Psoas muscle (tissue), 8 donors: ENCODE measurements at regions of chrX and their contacts with region 1.

Region 1: GRCh38 chrX:130916636-130917422 is 13.8 kb upstream of the ENOX2 start:
- DNase-seq: peak; percentile 18 to 42
- ATAC-seq: peak; percentile 44 to 77 (median 62)
- H3K4me3 ChIP-seq: no peak overlapping the region
- H3K27ac ChIP-seq: no peak overlapping the region
- H3K4me1 ChIP-seq: no peaks in the 10 kb centered on the region
- H3K27me3 ChIP-seq: peaks cover 0 to 7% (median 0%) of the 10 kb centered on the region in 3 donors
- CTCF ChIP-seq: peak; percentile 79

Region 2: DNA sequence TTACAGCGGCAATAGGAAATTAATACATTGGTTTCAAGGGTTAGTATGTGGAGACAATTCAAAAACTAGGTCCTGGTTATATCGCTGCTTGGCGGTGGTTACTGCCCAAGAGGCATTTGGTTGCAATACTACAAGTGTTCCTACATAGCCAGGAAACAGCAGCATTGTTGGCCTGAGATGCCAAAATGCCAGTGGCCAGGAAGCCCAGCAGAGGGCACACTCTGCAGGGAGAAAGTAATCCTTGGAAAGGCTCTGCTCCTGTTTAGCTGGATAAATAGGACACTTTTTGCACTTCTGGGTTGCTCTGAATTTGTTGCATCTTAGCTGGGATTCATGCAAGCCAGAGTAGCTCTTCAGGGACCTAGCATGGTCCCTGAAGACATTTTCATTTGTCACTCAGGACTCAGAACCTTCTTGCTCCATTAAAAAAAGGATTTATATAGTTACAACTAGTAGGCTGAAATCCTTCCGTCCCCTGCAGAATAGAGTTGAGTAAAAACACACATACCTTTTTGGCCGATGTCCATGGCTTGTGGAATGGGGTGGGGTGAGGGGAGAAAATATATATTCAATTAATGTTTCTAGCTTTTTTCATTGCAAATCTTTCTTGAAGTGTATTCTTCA is 523.3 kb before region 1 on chrX:
- intact Hi-C with region 1: loop called (anchors 5 kb)
- DNase-seq: peak in 1 of 2 donors; percentile 18
- ATAC-seq: peak in 2 of 4 donors; percentile 57 to 71
- H3K4me3 ChIP-seq: no peak overlapping the region
- H3K27ac ChIP-seq: no peak overlapping the region
- H3K4me1 ChIP-seq: no peaks in the 10 kb centered on the region
- H3K27me3 ChIP-seq: peaks cover 0 to 7% (median 0%) of the 10 kb centered on the region in 3 donors
- CTCF ChIP-seq: peak; percentile 62

Region 3: DNA sequence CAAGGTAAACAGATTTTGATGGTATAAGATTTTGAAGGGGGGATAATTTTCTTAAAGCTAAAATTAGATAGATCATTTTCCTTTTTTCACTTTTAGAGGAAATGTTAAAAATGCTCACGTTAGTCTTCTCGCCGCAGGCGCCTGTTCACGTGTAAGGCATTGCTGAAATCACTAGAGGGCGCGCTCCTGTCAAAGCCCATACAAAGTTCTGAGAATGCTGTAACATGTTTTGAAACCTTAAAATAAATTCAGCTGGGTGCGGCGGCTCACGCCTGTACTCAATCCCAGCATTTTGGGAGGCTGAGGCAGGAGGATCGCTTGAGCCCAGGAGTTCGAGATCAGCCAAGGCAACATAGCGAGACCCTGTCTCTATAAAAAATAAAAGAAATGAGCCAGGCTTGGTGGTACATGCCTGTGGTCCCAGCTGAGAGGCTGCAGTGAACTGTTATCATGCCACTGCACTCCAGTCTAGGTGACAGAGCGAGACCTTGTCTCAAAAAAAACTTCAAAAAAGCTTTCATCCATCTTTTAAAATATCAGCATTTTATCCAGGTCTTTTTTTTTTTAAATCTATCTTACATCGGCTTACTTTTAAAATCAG is 377.0 kb before region 1 on chrX:
- intact Hi-C with region 1: loop called (anchors 2 to 10 kb)
- DNase-seq: peak; percentile 20 to 42
- ATAC-seq: peak in 2 of 4 donors; percentile 37 to 39
- H3K4me3 ChIP-seq: no peak overlapping the region
- H3K27ac ChIP-seq: no peak overlapping the region
- H3K4me1 ChIP-seq: no peaks in the 10 kb centered on the region
- H3K27me3 ChIP-seq: no peaks in the 10 kb centered on the region
- CTCF ChIP-seq: peak; percentile 62

Region 4: DNA sequence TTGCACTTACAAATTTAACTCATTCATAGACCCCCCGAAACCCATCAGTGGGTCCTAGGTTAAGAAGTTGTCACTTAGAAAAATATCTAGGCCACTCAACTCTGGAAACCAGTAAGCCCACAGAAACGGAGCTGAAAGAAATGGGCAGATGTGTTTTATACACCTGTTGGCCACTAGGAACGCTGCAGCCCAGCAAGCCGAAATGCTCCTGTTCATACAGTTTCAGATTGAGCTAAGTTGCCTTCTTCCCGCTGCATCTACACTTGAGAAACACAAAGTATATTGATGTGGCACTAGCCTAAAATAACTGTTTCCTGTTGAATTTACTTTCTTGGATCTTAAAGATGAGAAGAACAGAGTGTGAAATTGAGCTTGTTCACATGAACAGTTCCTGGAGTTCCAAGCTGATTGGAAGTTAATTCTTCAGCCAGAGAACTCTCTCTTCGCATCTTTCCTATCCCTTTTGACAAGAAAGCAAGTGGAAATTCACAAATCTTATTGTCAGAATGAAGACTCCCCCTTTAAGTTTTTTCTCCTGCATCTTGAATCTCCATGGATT is 340.9 kb before region 1 on chrX:
- intact Hi-C with region 1: loop called (anchors 5 kb)
- DNase-seq: peak; percentile 16 to 54
- ATAC-seq: peak in 1 of 4 donors; percentile 46
- H3K4me3 ChIP-seq: no peak overlapping the region
- H3K27ac ChIP-seq: no peak overlapping the region
- H3K4me1 ChIP-seq: no peaks in the 10 kb centered on the region
- H3K27me3 ChIP-seq: peaks cover 0 to 2% (median 0%) of the 10 kb centered on the region in 3 donors
- CTCF ChIP-seq: peak; percentile 76

Region 5: GRCh38 chrX:131010186-131010585 is 93.4 kb after region 1 on chrX:
- intact Hi-C with region 1: no loop called
- DNase-seq: no peak
- ATAC-seq: no peak
- H3K4me3 ChIP-seq: no peak overlapping the region
- H3K27ac ChIP-seq: no peak overlapping the region
- H3K4me1 ChIP-seq: no peaks in the 10 kb centered on the region
- H3K27me3 ChIP-seq: peaks cover 0 to 28% (median 0%) of the 10 kb centered on the region in 3 donors
- CTCF ChIP-seq: no peak